PC-3 (cell line): ENCODE measurements at regions of chr17 and their contacts with region 1.

Region 1: GRCh38 chr17:72030067-72030899 is 90.5 kb upstream of the SOX9 start:
- DNase-seq: peak; percentile 63
- ATAC-seq: peak; percentile 85
- H3K4me3 ChIP-seq: peak overlapping the region; percentile 58
- H3K27ac ChIP-seq: no peak overlapping the region
- H3K4me1 ChIP-seq: peaks cover 5% of the 10 kb centered on the region; the same call in 1 of the 2 replicates
- H3K27me3 ChIP-seq: no peaks in the 10 kb centered on the region
- CTCF ChIP-seq: peak; percentile 53

Region 2: GRCh38 chr17:71494062-71494855 is 536.0 kb before region 1 on chr17:
- CTCF ChIA-PET with region 1: no interaction called
- POLR2A ChIA-PET with region 1: no interaction called
- intact Hi-C with region 1: no loop called
- DNase-seq: no peak
- ATAC-seq: no peak
- H3K4me3 ChIP-seq: no peak overlapping the region
- H3K27ac ChIP-seq: no peak overlapping the region
- H3K4me1 ChIP-seq: no peaks in the 10 kb centered on the region
- H3K27me3 ChIP-seq: no peaks in the 10 kb centered on the region
- CTCF ChIP-seq: no peak

Region 3: GRCh38 chr17:71985111-71986039 is 44.9 kb before region 1 on chr17:
- CTCF ChIA-PET with region 1: no interaction called
- POLR2A ChIA-PET with region 1: no interaction called
- intact Hi-C with region 1: no loop called
- DNase-seq: peak; percentile 84
- ATAC-seq: peak; percentile 54
- H3K4me3 ChIP-seq: no peak overlapping the region
- H3K27ac ChIP-seq: peak overlapping the region; percentile 98
- H3K4me1 ChIP-seq: peaks cover 57% of the 10 kb centered on the region
- H3K27me3 ChIP-seq: no peaks in the 10 kb centered on the region
- CTCF ChIP-seq: no peak

Region 4: DNA sequence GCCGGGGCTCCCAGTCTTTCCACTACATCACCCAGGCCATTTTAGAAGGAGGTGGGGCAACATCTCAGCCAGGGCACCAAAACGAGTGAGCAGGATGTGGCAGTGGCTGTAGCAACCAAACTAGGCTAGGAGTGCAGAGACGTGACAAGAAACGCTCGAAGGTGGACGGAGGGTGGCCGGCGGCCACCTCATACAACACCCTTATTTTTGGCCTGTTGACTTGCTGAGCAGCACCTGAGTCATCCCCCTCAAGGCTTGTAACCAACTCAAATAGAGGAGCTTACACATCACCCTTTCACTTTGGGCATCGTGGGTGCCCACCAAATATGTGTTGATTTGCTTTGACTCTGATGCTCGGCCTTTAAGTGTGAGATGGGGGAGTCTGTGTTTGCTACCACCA is 66.9 kb after region 1 on chr17:
- CTCF ChIA-PET with region 1: no interaction called
- POLR2A ChIA-PET with region 1: no interaction called
- intact Hi-C with region 1: loop called (anchors 5 kb)
- DNase-seq: peak; percentile 99
- ATAC-seq: peak; percentile 98
- H3K4me3 ChIP-seq: peak overlapping the region; percentile 3; the same call in 1 of the 2 replicates
- H3K27ac ChIP-seq: peak overlapping the region; percentile 65
- H3K4me1 ChIP-seq: peaks cover 18% of the 10 kb centered on the region
- H3K27me3 ChIP-seq: no peaks in the 10 kb centered on the region
- CTCF ChIP-seq: no peak

Region 5: GRCh38 chr17:72120642-72121163 is 90.4 kb after region 1 on chr17 and contains the start of gene SOX9:
- CTCF ChIA-PET with region 1: no interaction called
- POLR2A ChIA-PET with region 1: no interaction called
- intact Hi-C with region 1: no loop called
- DNase-seq: peak; percentile 99
- ATAC-seq: peak; percentile 76
- H3K4me3 ChIP-seq: peak within 1 kb of the TSS; percentile 85
- H3K27ac ChIP-seq: peak within 1 kb of the TSS; percentile 83
- H3K4me1 ChIP-seq: peaks cover 37% of the 10 kb centered on the region
- H3K27me3 ChIP-seq: no peaks in the 10 kb centered on the region
- CTCF ChIP-seq: no peak
- total RNA-seq, gene SOX9: 119 and 151 TPM in 2 replicates